Cardiac septum (tissue), 1 donor: ENCODE measurements at regions of chrX and their contacts with region 1.

Region 1: GRCh38 chrX:47644557-47645091 is 5.7 kb downstream of the ELK1 start:
- DNase-seq: no peak

Region 2: GRCh38 chrX:47200385-47201150 is 444.1 kb before region 1 on chrX:
- intact Hi-C with region 1: loop called (anchors 5 kb)
- DNase-seq: no peak

Region 3: GRCh38 chrX:47413179-47413594 is 231.4 kb before region 1 on chrX:
- intact Hi-C with region 1: no loop called
- DNase-seq: no peak

Region 4: GRCh38 chrX:47573394-47574075 is 71.1 kb before region 1 on chrX:
- intact Hi-C with region 1: loop called (anchors 5 kb)
- DNase-seq: no peak

Region 5: DNA sequence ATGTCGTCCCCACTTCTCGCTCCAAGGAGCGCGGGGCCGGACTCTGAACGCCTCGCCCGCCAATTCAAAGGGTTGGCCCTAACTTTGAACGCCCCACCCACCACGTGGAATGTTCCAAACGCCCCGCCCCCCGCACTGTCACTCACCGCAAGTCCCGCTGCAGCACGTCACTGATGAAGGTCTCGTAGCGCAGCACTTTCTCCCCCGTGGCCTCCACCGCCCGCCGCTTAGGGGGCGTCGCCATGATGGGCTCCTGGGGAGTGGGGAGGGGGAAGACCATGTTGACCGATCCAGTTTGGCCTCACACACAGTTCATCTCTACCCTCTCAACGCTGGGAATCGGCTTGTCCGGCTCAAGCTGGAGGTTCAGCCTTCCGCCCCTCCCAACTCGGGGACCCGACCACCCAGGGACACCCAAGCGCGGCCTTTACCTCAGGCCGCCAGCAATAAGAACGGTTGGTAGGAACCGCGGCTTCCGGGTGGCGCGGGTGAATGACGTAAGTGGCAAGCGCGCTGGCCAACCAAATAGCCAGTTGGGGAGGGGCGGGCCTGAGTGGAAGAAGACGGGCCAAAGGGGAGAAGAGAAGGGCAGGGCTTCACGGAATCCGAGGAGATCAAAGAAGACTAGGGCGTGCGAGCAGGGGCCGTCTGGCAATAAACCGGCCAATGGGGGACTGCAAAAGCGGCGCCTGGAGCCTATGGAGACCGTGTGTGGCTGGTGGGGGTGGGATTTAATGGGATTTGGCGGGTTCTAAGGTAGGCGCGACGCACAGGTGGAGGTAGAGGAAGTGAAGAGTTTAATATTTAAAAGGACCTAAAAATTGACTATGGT is 14.3 kb after region 1 on chrX and contains the start of gene UXT:
- intact Hi-C with region 1: no loop called
- DNase-seq: peak; percentile 95
- total RNA-seq, gene UXT: 83.2 TPM

Region 6: GRCh38 chrX:47802589-47802988 is 158.0 kb after region 1 on chrX:
- intact Hi-C with region 1: no loop called
- DNase-seq: no peak